CD8-positive, alpha-beta T cell (primary cell): ENCODE measurements at regions of chr2 and their contacts with region 1.

Region 1: DNA sequence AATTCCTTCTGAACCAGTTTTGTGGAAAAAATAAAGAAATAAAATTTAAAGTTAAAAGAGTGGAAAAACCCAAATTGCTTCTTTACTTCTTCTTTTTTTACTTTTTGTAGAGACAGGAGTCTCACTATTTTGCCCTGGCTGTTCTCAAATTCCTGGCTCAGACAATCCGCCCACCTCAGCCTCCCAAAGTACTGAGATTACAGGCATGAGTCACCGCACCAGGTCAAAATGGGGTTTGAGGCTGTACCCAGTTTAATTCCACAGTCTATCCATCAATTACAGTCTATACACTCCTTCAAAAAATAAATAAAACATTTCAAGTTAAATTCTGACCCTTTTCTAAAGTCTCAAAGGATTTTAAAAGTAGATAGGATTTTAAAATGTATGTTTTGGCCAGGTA is 120.3 kb downstream of the FAM161A start:
- DNase-seq: no peak
- ATAC-seq: no peak
- H3K4me3 ChIP-seq: no peak overlapping the region
- H3K4me3 Mint-ChIP-seq: no peak overlapping the region
- H3K27ac ChIP-seq: no peak overlapping the region
- H3K27ac Mint-ChIP-seq: no peak overlapping the region
- H3K4me1 ChIP-seq: no peaks in the 10 kb centered on the region
- H3K4me1 Mint-ChIP-seq: no peaks in the 10 kb centered on the region
- H3K27me3 ChIP-seq: no peaks in the 10 kb centered on the region
- H3K27me3 Mint-ChIP-seq: peaks cover 3% of the 10 kb centered on the region
- CTCF ChIP-seq: no peak

Region 2: DNA sequence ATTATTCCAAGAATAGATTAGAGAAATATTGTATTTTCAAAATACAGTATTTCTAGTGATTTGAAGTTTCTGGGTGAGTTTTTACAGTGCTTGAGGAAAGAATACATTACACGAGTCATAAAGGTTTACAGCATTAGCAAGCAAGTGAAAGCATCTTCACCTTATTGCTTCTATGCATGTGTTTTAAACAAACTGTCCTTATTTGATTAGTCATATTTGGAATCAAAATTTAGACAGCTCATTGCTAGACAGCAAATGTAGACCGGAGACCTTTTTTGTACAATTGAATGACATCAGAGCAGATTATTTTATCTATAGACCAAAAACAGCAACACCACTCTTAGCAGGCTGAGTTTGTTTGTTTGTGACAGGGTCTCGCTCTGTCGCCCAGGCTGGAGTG is 51.1 kb after region 1 on chr2:
- CTCF ChIA-PET with region 1: no interaction called
- POLR2A ChIA-PET with region 1: no interaction called
- intact Hi-C with region 1: loop called in 1 of 2 experiments (anchors 5 kb)
- DNase-seq: no peak
- ATAC-seq: no peak
- H3K4me3 ChIP-seq: no peak overlapping the region
- H3K4me3 Mint-ChIP-seq: no peak overlapping the region
- H3K27ac ChIP-seq: no peak overlapping the region
- H3K27ac Mint-ChIP-seq: no peak overlapping the region
- H3K4me1 ChIP-seq: no peaks in the 10 kb centered on the region
- H3K4me1 Mint-ChIP-seq: no peaks in the 10 kb centered on the region
- H3K27me3 ChIP-seq: no peaks in the 10 kb centered on the region
- H3K27me3 Mint-ChIP-seq: peaks cover 11% of the 10 kb centered on the region
- CTCF ChIP-seq: no peak